SK-N-SH (cell line): ENCODE measurements at regions of chr5 and their contacts with region 1.

Region 1: DNA sequence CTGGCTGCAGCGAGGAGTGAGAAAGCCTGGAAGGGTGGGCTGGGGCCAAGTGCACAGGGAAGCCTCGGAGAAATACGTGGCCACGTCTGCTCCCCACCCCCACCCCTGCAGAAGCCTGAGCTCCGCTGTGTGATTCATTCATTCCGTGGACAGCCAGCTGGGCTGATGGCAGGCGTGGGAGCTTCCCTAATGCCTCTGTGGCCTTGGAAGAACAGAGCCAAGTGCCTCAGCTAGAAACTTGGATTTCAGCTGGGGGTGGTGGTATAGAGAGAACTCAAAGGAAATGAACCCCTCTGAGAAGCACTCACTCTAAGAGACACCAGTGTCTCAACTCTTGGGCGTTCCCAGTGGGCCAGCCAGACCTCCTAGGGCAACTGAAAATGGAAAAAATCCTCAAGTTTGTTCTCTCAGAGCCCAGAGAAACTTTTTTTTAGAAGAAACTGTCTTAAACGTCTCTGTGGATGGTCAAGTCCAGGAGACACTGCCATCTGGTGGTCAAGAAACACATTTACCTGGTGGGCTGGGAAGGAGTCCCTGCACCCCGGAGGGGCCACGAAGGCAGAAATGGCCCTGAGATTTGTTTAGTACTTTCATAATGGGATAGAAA is 18.0 kb downstream of the ATOX1 start:
- DNase-seq: peak; percentile 70
- H3K4me3 ChIP-seq: peak overlapping the region; percentile 9 to 51; a peak in 3 of 4 replicates
- H3K27ac ChIP-seq: peak overlapping the region; percentile 87 to 100
- H3K4me1 ChIP-seq: peaks cover 22 to 41% of the 10 kb centered on the region in 2 experiments; a peak in 3 of 4 replicates
- H3K27me3 ChIP-seq: no peaks in the 10 kb centered on the region
- CTCF ChIP-seq: peak; percentile 95
- EP300 ChIP-seq: peak; percentile 3 to 80; a peak in 1 of 4 replicates
- RAD21 ChIP-seq: peak; percentile 80

Region 2: GRCh38 chr5:151097786-151098498 is 642.5 kb before region 1 on chr5:
- CTCF ChIA-PET with region 1: no interaction called
- POLR2A ChIA-PET with region 1: no interaction called
- DNase-seq: no peak
- H3K4me3 ChIP-seq: no peak overlapping the region
- H3K27ac ChIP-seq: no peak overlapping the region
- H3K4me1 ChIP-seq: peaks cover 10 to 20% of the 10 kb centered on the region in 2 experiments; a peak in 3 of 4 replicates
- H3K27me3 ChIP-seq: no peaks in the 10 kb centered on the region
- CTCF ChIP-seq: no peak
- EP300 ChIP-seq: no peak
- RAD21 ChIP-seq: no peak

Region 3: GRCh38 chr5:151463137-151464029 is 277.1 kb before region 1 on chr5:
- CTCF ChIA-PET with region 1: interaction called, 12 read pairs
- POLR2A ChIA-PET with region 1: no interaction called
- DNase-seq: no peak
- H3K4me3 ChIP-seq: no peak overlapping the region
- H3K27ac ChIP-seq: no peak overlapping the region
- H3K4me1 ChIP-seq: no peaks in the 10 kb centered on the region
- H3K27me3 ChIP-seq: no peaks in the 10 kb centered on the region
- CTCF ChIP-seq: no peak
- EP300 ChIP-seq: no peak
- RAD21 ChIP-seq: no peak

Region 4: DNA sequence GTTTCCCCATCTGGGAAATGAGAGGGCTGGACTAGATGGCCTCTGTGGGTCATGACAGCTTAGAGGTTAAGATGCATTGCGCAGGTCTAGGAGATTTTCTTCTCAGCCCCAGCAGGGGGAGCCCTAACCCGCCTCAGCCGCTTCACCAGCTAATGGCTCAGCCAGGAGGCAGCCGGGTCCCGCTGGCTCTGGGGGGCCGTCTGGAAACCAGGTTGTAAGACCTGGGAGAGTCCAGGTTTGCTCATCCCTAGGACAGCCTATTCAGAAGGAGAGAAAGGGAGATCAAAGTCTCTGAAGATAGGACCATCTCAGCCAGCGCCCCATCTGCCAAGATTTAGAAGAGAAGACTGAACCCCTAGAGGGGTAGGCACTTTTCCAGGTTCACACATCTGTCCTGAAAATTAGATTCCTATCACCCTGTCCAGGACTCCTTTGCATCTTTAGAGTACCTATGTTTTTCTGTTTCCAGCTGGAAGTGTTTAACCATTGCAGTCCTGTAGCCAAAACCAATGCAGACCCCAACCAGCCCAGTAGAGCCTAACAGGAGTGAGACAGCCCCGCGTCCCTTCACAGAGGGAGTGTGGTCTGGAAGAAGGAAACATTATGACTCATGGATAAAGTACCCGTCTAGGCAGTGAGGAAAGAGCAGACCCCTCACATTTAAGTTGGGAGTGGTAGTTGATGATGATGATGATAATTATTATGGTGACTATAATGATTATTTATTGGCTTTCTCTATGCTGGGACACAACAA is 81.3 kb before region 1 on chr5:
- CTCF ChIA-PET with region 1: interaction called, 375 read pairs
- POLR2A ChIA-PET with region 1: interaction called, 13 read pairs
- DNase-seq: peak; percentile 81
- H3K4me3 ChIP-seq: peak overlapping the region in 1 of 2 experiments; percentile 27; a peak in 1 of 4 replicates
- H3K27ac ChIP-seq: peak overlapping the region in 1 of 2 experiments; percentile 97; a peak in 2 of 4 replicates
- H3K4me1 ChIP-seq: peaks cover 5 to 12% of the 10 kb centered on the region in 2 experiments; a peak in 2 of 4 replicates
- H3K27me3 ChIP-seq: no peaks in the 10 kb centered on the region
- CTCF ChIP-seq: peak; percentile 89
- EP300 ChIP-seq: no peak
- RAD21 ChIP-seq: peak; percentile 96

Region 5: DNA sequence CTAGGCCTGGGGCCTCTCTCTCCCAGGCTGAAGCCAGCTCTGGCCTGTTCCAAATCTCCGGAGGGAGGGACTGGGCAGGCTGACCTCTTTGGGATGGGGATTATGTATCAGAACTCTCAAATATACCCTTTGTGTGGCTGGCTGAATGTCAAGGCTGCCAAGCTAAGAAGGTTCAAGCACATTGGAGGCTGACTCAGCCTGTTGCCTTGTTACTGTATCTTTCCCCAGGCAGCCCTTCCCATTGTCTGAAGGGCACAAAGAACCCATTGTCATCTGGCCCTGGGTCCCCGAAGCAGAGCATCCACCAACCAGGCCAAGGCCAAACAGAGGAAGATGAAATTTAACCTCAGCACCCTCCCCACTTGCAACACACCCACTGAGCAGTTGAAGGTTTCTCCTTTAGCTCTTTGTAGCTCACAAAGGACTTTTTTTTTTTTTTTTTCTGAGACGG is 46.4 kb before region 1 on chr5:
- CTCF ChIA-PET with region 1: interaction called, 12 read pairs
- POLR2A ChIA-PET with region 1: interaction called, 4 read pairs
- DNase-seq: no peak
- H3K4me3 ChIP-seq: no peak overlapping the region
- H3K27ac ChIP-seq: peak overlapping the region in 1 of 2 experiments; percentile 100; a peak in 2 of 4 replicates
- H3K4me1 ChIP-seq: peaks cover 3 to 34% of the 10 kb centered on the region in 2 experiments; a peak in 3 of 4 replicates
- H3K27me3 ChIP-seq: no peaks in the 10 kb centered on the region
- CTCF ChIP-seq: no peak
- EP300 ChIP-seq: no peak
- RAD21 ChIP-seq: no peak

Region 6: GRCh38 chr5:151719228-151720000 is 21.0 kb before region 1 on chr5:
- CTCF ChIA-PET with region 1: interaction called, 11 read pairs
- POLR2A ChIA-PET with region 1: no interaction called
- DNase-seq: no peak
- H3K4me3 ChIP-seq: no peak overlapping the region
- H3K27ac ChIP-seq: peak overlapping the region in 1 of 2 experiments; percentile 60; a peak in 2 of 4 replicates
- H3K4me1 ChIP-seq: peaks cover 0 to 8% of the 10 kb centered on the region in 2 experiments; a peak in 1 of 4 replicates
- H3K27me3 ChIP-seq: no peaks in the 10 kb centered on the region
- CTCF ChIP-seq: peak; percentile 64
- EP300 ChIP-seq: no peak
- RAD21 ChIP-seq: peak; percentile 64

Region 7: GRCh38 chr5:151758430-151759241 is 18.2 kb after region 1 on chr5 and contains the start of gene ATOX1:
- CTCF ChIA-PET with region 1: interaction called, 88 read pairs
- POLR2A ChIA-PET with region 1: no interaction called
- DNase-seq: peak; percentile 100
- H3K4me3 ChIP-seq: peak within 1 kb of the TSS; percentile 73 to 85
- H3K27ac ChIP-seq: peak within 1 kb of the TSS; percentile 59 to 72; a peak in 3 of 4 replicates
- H3K4me1 ChIP-seq: peaks cover 0 to 17% of the 10 kb centered on the region in 2 experiments; a peak in 1 of 4 replicates
- H3K27me3 ChIP-seq: no peaks in the 10 kb centered on the region
- CTCF ChIP-seq: no peak
- EP300 ChIP-seq: no peak
- RAD21 ChIP-seq: no peak
- polyA plus RNA-seq, gene ATOX1: 344 and 497 TPM in 2 replicates

Region 8: DNA sequence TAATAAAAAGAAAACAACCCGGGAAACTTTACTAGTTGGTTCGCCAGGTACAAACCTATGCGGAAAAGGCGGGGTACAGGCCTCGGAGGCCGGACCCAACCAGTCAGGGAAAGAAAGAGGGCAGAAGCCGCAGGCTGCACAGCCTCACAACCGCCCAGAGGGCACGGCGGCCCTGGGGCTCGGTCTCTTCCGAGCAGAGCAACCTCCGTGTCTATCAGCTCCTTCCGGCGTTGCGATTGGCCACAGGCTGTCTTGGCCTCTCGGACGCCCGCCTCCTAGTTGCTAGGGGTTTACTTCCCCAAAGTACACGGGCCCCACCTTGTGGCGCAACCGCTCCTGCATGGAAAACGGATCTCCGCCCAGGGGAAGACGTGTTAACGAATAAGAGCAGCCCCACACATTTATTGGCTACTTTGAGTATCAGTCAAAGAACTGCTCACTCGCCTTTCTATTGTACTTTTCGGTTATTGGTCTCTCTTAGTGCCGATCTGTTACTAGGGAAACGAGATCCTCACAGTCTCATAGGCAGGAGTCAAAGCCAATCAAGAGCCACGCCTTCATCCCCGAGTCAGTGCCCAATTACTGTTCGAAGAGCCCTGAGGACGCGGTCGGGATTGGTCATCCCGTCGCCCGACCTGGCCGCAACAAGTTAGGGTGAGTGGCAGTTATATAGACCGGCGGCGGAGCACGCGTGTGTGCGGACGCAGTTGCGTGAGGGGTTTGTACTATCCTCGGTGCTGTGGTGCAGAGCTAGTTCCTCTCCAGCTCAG is 31.0 kb after region 1 on chr5 and contains the start of gene G3BP1:
- CTCF ChIA-PET with region 1: interaction called, 27 read pairs
- POLR2A ChIA-PET with region 1: no interaction called
- DNase-seq: peak; percentile 96
- H3K4me3 ChIP-seq: peak within 1 kb of the TSS; percentile 77 to 92
- H3K27ac ChIP-seq: peak within 1 kb of the TSS; percentile 87 to 94
- H3K4me1 ChIP-seq: peaks cover 19 to 31% of the 10 kb centered on the region in 2 experiments; a peak in 3 of 4 replicates
- H3K27me3 ChIP-seq: no peaks in the 10 kb centered on the region
- CTCF ChIP-seq: peak; percentile 71
- EP300 ChIP-seq: no peak
- RAD21 ChIP-seq: peak; percentile 76
- polyA plus RNA-seq, gene G3BP1: 21.7 and 25.1 TPM in 2 replicates